ENCODE measurements at regions of chr20 and their contacts with region 1.

Region 1: GRCh38 chr20:52438324-52438963 is 246.9 kb upstream of the ZFP64 start:
- DNase-seq: no peak
- ATAC-seq: no peak
- H3K4me3 ChIP-seq: no peak overlapping the region
- H3K27ac ChIP-seq: no peak overlapping the region
- H3K4me1 ChIP-seq: no peaks in the 10 kb centered on the region
- H3K27me3 ChIP-seq: peaks cover 49% of the 10 kb centered on the region
- CTCF ChIP-seq: no peak

Region 2: GRCh38 chr20:52493171-52493721 is 54.8 kb after region 1 on chr20:
- CTCF ChIA-PET with region 1: no interaction called
- POLR2A ChIA-PET with region 1: no interaction called
- intact Hi-C with region 1: no loop called
- DNase-seq: no peak
- ATAC-seq: no peak
- H3K4me3 ChIP-seq: no peak overlapping the region
- H3K27ac ChIP-seq: no peak overlapping the region
- H3K4me1 ChIP-seq: no peaks in the 10 kb centered on the region
- H3K27me3 ChIP-seq: no peaks in the 10 kb centered on the region
- CTCF ChIP-seq: no peak

Region 3: DNA sequence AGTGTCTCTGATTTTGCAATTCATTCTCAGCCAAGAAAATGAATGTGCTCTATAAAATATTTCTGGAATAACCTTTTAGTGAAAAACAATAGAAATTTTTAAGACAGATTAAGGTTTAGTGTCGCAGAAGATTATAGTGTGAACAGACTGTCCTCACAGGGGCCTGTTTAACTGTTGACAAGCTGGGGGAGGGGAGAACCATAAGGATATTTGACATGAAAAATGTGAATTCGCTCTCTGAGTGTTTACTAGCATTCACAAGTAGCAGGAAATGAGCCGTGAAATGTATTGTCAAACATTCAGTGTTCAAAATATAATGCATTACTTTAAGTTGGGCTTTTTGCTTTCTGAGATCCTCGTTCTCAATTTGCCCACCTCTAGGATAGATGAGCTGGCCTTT is 398.9 kb after region 1 on chr20:
- CTCF ChIA-PET with region 1: interaction called, 11 read pairs
- POLR2A ChIA-PET with region 1: no interaction called
- intact Hi-C with region 1: no loop called
- DNase-seq: no peak
- ATAC-seq: no peak
- H3K4me3 ChIP-seq: no peak overlapping the region
- H3K27ac ChIP-seq: no peak overlapping the region
- H3K4me1 ChIP-seq: no peaks in the 10 kb centered on the region
- H3K27me3 ChIP-seq: peaks cover 32% of the 10 kb centered on the region
- CTCF ChIP-seq: no peak